ENCODE measurements at regions of chrX and their contacts with region 1.

Region 1: DNA sequence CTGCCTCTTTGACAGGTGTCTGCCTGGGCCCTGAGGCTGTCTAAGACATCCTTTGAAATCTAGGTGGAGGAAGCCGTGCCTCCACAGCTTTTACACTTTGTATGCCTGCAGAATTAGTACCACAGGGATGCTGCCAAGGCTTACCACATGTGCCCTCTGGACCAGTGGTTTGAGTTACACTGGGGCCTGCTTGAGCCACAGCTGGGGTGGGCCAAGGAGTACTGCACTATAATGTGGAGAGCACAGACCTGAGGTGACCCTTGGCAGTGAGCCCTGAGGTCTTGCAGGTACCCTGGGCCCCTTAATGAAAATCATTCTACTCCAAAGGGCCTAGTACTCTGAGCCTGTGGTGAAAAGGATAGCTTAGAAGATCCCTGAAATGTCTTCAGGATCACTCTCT is 27.2 kb upstream of the IRS4 start:
- H3K4me3 ChIP-seq: no peak overlapping the region
- H3K27ac ChIP-seq: no peak overlapping the region
- H3K4me1 ChIP-seq: no peaks in the 10 kb centered on the region
- CTCF ChIP-seq: no peak

Region 2: GRCh38 chrX:108285356-108285755 is 478.2 kb before region 1 on chrX:
- CTCF ChIA-PET with region 1: no interaction called
- POLR2A ChIA-PET with region 1: no interaction called
- H3K4me3 ChIP-seq: no peak overlapping the region
- H3K27ac ChIP-seq: no peak overlapping the region
- H3K4me1 ChIP-seq: no peaks in the 10 kb centered on the region
- CTCF ChIP-seq: no peak

Region 3: GRCh38 chrX:108610141-108610540 is 153.4 kb before region 1 on chrX:
- CTCF ChIA-PET with region 1: interaction called, 10 read pairs
- POLR2A ChIA-PET with region 1: no interaction called
- H3K4me3 ChIP-seq: no peak overlapping the region
- H3K27ac ChIP-seq: no peak overlapping the region
- H3K4me1 ChIP-seq: no peaks in the 10 kb centered on the region
- CTCF ChIP-seq: no peak

Region 4: GRCh38 chrX:108737754-108738153 is 25.8 kb before region 1 on chrX:
- CTCF ChIA-PET with region 1: no interaction called
- POLR2A ChIA-PET with region 1: no interaction called
- H3K4me3 ChIP-seq: no peak overlapping the region
- H3K27ac ChIP-seq: peak overlapping the region; percentile 61; the same call in 1 of the 2 replicates
- H3K4me1 ChIP-seq: no peaks in the 10 kb centered on the region
- CTCF ChIP-seq: no peak

Region 5: DNA sequence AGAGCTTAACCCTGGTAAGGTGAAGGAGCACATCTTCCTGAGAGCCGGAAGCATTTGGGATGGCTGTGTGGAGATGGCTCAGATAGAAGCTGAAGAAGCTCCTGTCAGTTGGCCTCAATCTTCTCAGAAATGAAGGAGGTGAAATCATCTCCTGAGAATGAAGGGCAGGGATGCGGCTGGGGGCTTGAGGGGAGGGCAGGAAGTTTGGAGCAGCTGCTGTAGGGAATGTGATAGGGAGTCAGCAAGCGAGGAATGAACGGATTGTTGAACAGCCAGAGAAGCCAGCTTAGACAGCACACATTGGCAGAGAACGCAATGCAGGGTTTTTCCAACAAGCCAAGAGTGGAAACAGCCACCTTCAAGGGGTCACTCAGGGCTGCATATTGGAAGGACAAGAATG is 851.4 kb after region 1 on chrX:
- CTCF ChIA-PET with region 1: no interaction called
- POLR2A ChIA-PET with region 1: no interaction called
- H3K4me3 ChIP-seq: no peak overlapping the region
- H3K27ac ChIP-seq: no peak overlapping the region
- H3K4me1 ChIP-seq: no peaks in the 10 kb centered on the region
- CTCF ChIP-seq: no peak

Measured in HEK293 (cell line).